CD8-positive, alpha-beta T cell (primary cell): ENCODE measurements at regions of chr2 and their contacts with region 1.

Region 1: DNA sequence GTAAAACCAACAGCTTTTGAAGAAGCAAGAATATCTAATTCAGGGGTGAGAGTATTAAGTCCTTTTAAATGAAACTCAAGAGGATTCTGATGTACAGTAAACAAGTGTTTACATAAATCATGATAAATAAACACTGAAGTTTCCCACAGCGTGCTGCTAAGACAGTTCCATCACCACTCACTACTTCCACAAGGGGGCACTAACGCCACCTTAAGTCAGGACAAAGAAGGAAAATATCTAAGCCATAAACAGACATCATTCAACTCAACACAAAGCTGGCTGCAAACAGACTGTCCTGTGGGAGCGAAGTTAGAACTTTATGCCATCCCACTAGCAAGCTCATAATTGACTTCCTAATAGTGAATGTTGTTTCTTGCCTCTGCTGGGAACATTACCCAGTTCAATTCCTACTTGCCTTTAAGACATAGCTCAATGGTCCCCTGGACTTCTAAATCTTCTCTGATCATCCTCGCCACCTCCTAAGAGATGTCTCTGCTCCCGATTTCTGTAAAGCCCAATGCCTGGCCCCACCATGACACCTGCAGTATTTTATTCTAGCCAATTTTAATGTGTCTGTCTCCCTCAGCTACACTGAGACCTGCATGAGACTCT is 36.5 kb downstream of the MRPL44 start:
- DNase-seq: peak; percentile 21 to 78 (median 64)
- ATAC-seq: peak; percentile 64
- H3K4me3 ChIP-seq: no peak overlapping the region
- H3K4me3 Mint-ChIP-seq: no peak overlapping the region
- H3K27ac ChIP-seq: no peak overlapping the region
- H3K27ac Mint-ChIP-seq: no peak overlapping the region
- H3K4me1 ChIP-seq: no peaks in the 10 kb centered on the region
- H3K4me1 Mint-ChIP-seq: no peaks in the 10 kb centered on the region
- H3K27me3 ChIP-seq: no peaks in the 10 kb centered on the region
- H3K27me3 Mint-ChIP-seq: no peaks in the 10 kb centered on the region
- CTCF ChIP-seq: peak; percentile 82

Region 2: DNA sequence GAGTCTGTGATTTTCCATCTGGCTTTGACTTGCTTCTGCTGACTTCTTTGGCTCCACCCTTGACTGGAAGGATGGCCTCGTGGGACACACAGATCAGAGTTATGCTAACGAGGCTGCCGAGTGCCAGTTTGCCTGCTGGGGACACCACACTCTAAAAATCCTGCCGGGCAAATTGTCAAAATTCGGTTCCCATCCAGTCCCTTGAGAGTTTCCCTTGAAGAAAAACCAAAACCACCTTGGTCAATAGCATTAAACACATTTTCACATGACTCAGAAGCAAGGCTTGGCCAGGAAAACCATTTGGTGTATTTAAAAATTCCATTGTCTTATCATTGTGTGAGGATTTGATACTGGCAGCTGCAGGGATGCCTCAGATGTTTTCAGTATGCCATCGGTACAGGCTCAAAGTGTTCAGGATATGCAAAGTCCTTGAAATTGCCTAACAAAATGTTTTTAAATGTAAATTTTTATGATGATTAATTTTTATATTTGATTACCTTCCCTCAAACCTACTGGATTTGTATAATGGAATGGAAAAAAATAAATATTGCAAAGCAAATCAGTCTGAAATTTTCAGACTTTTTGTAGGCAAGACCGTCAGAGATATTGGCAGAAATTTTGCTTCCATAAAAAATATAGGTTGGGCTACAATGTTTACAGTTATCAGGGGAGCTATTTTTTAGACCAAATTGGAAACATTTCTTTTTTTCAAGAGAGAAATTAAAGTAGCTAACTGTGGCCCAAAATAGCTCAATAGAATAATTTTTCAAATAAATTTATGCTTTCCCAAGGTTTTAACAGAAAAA is 900.1 kb before region 1 on chr2:
- CTCF ChIA-PET with region 1: no interaction called
- POLR2A ChIA-PET with region 1: no interaction called
- intact Hi-C with region 1: no loop called
- DNase-seq: no peak
- ATAC-seq: no peak
- H3K4me3 ChIP-seq: no peak overlapping the region
- H3K4me3 Mint-ChIP-seq: no peak overlapping the region
- H3K27ac ChIP-seq: no peak overlapping the region
- H3K27ac Mint-ChIP-seq: no peak overlapping the region
- H3K4me1 ChIP-seq: no peaks in the 10 kb centered on the region
- H3K4me1 Mint-ChIP-seq: no peaks in the 10 kb centered on the region
- H3K27me3 ChIP-seq: no peaks in the 10 kb centered on the region
- H3K27me3 Mint-ChIP-seq: peaks cover 2% of the 10 kb centered on the region
- CTCF ChIP-seq: no peak

Region 3: DNA sequence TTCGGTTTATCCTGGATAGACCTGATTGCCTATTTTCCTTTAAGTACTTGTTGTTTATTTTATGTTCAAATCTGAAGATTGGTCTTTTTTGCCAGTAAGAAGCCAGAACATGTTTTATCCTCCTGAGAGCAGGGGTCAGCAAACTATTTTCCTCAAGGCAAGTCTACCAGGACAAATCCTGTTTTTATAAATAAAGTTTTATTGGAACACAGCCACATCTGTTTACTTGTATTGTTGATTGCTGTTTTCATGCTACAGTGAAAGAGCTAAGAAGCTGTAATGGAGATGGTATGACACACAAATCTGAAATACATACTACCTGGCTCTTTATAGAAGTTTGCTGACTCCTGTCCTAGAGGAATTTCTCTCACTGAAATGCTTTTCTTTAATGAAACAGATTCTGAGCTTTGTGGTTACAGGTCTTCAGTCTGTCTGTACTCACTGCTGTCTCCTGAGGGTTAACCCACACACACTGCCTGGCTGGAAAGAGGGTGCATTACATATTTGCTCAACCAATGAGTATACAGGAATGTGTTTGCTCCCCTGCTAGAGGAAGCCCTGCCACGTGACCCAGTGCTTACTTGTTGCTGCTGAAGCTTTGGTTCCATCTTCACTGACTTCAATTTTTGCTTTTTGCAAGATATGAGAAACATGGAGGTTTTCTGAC is 13.9 kb before region 1 on chr2:
- CTCF ChIA-PET with region 1: interaction called, 18 read pairs
- POLR2A ChIA-PET with region 1: no interaction called
- intact Hi-C with region 1: no loop called
- DNase-seq: no peak
- ATAC-seq: no peak
- H3K4me3 ChIP-seq: no peak overlapping the region
- H3K4me3 Mint-ChIP-seq: no peak overlapping the region
- H3K27ac ChIP-seq: no peak overlapping the region
- H3K27ac Mint-ChIP-seq: no peak overlapping the region
- H3K4me1 ChIP-seq: no peaks in the 10 kb centered on the region
- H3K4me1 Mint-ChIP-seq: no peaks in the 10 kb centered on the region
- H3K27me3 ChIP-seq: no peaks in the 10 kb centered on the region
- H3K27me3 Mint-ChIP-seq: no peaks in the 10 kb centered on the region
- CTCF ChIP-seq: no peak

Region 4: DNA sequence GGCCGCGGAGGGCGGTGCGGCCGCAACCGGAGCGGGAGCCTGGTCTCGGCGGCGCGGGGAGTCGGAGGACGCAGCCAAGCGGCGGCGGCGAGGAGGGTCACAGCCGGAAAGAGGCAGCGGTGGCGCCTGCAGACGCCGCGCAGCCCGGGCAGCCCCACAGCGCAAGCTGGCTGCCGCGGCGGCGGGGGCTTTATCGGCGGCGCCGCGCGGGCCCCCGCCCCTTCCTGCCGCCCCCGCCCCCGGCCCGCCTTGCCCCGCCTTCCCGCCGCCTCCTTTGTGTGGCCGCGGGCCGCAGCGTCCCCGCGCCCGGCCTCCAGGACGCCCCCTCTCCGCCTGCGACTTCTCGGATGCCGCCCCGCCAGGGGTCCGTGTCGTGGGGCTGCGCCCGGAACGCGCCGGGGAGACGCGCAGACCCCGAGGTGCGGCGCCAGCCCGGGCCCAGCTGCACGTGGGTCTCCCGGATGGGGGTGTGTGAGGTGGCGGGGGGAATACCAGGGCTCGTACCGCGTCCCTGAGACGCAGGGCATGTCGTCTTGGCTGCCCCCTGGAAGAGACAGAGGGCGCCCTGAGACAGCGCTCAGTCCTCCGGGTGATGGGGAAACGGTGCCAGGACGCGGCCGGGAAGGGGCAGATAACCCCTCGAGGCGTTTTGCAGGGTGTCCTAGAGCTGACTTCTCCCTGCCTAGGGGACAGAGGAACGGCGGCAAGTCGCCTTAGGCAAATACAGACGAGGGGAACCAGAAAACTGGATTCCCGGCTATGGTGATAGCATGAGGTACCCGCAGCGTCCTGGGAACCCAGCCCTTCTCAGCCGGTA is 45.6 kb after region 1 on chr2 and contains the start of gene SERPINE2:
- CTCF ChIA-PET with region 1: interaction called, 8 read pairs
- POLR2A ChIA-PET with region 1: no interaction called
- intact Hi-C with region 1: loop called in 1 of 2 experiments (anchors 2 kb)
- DNase-seq: peak in 8 of 9 experiments; percentile 19 to 74 (median 52)
- ATAC-seq: peak; percentile 67
- H3K4me3 ChIP-seq: peak within 1 kb of the TSS; percentile 39 to 41
- H3K4me3 Mint-ChIP-seq: peak within 1 kb of the TSS; percentile 97
- H3K27ac ChIP-seq: no peak within 1 kb of the TSS
- H3K27ac Mint-ChIP-seq: peak within 1 kb of the TSS; percentile 65
- H3K4me1 ChIP-seq: peaks cover 11% of the 10 kb centered on the region
- H3K4me1 Mint-ChIP-seq: peaks cover 24% of the 10 kb centered on the region
- H3K27me3 ChIP-seq: peaks cover 0 to 2% of the 10 kb centered on the region in 2 experiments
- H3K27me3 Mint-ChIP-seq: peaks cover 42% of the 10 kb centered on the region
- CTCF ChIP-seq: no peak
- total RNA-seq, gene SERPINE2: 2.8 to 4.8 TPM

Region 5: DNA sequence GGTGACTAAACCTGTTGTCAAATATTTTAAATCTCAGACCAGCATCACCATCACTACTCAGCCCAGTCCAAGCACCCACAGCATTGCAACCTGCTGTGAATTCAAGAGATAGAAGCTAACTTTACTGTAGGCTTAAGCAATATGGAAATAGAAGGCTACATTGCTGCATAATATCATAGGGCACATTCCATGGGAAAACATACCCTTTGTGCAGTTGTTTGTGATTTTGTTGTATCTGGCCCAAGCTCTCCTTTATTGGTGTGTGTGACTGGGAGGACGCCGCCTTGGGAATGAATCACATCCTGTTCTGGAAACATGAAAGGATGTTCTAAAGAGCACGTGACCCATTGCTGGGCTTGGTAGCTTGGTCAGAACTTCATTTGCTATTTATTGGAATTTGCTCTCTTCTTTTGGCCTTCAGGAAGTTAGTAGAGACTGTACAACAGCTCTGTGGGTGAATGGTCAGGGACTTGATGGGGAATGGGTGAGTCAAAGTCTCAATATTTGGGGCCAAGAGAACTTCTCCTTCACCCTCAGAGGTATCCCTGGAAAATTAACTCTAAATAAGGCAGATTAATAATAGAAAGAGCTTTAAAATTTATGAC is 152.1 kb after region 1 on chr2:
- CTCF ChIA-PET with region 1: interaction called, 4 read pairs
- POLR2A ChIA-PET with region 1: no interaction called
- intact Hi-C with region 1: loop called in 1 of 2 experiments (anchors 10 kb)
- DNase-seq: no peak
- ATAC-seq: no peak
- H3K4me3 ChIP-seq: no peak overlapping the region
- H3K4me3 Mint-ChIP-seq: no peak overlapping the region
- H3K27ac ChIP-seq: no peak overlapping the region
- H3K27ac Mint-ChIP-seq: no peak overlapping the region
- H3K4me1 ChIP-seq: no peaks in the 10 kb centered on the region
- H3K4me1 Mint-ChIP-seq: no peaks in the 10 kb centered on the region
- H3K27me3 ChIP-seq: no peaks in the 10 kb centered on the region
- H3K27me3 Mint-ChIP-seq: peaks cover 5% of the 10 kb centered on the region
- CTCF ChIP-seq: no peak

Region 6: DNA sequence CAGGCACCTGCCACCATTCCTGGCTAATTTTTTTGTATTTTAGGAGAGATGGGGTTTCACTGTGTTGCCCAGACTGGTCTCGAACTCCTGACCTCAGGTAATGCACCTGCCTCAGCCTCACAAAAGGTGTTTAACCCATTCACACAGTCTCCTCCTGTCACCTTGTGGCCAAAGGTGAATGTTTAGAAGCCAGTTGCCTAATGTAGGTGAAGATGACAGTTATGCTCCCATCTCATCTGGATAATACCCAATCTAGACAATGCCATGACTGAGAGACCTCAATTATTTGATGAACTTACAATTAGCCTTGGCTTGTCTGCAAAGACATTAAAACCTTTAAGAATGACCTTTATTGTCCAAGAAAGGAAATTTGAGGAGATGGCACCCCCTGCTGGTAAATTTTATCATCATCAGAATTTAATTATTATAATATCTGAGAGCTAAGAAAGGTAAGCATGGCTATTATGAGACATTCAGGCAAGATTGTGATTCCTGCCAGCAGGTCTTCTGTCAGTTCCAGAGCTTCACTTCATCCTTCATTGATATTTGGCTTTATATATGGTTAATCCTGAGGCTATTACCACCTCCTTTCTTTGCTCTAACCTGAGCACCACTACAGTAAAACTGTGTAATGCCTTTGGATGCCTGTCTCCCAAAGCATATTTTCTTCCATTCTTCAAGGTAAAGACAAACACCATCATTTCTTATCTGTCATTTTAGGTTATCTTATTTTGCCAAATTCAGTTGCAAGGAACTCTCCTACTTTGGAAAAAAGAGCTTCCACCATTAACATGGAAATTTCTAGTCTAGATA is 290.6 kb after region 1 on chr2:
- CTCF ChIA-PET with region 1: interaction called, 143 read pairs
- POLR2A ChIA-PET with region 1: interaction called, 5 read pairs
- intact Hi-C with region 1: loop called (anchors 1 kb)
- DNase-seq: peak in 4 of 9 experiments; percentile 1 to 47 (median 36)
- ATAC-seq: no peak
- H3K4me3 ChIP-seq: no peak overlapping the region
- H3K4me3 Mint-ChIP-seq: no peak overlapping the region
- H3K27ac ChIP-seq: no peak overlapping the region
- H3K27ac Mint-ChIP-seq: no peak overlapping the region
- H3K4me1 ChIP-seq: no peaks in the 10 kb centered on the region
- H3K4me1 Mint-ChIP-seq: no peaks in the 10 kb centered on the region
- H3K27me3 ChIP-seq: peaks cover 0 to 4% of the 10 kb centered on the region in 2 experiments
- H3K27me3 Mint-ChIP-seq: peaks cover 23% of the 10 kb centered on the region
- CTCF ChIP-seq: peak; percentile 62

Region 7: DNA sequence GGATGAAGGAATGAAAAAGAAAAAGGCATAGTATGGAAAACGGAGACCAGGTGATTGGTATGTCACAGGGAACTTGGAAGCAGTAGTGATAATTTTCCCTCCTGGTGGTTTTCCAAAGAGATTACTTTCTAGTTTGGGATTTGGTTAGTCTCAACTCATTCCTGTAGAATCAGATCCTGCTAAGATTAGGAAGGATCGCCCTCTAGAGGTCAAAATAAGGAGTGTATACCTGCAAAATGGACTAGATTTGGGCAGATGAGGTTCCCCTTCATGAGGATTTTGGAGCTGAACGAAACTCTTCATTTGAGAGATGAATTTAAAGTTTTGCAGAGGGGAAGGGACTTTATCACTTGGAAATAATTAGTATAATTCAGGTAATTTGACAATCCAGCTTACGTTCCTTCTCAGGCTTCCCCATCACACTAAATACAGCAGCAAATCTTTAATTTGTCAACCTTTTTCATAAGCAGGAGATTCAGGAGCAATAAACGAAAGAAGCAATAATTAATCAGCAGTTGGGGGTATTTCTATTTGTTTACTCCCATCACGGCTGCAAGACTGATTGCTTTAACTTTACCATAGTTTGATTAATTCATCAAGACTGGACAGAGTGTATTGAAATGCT is 657.2 kb after region 1 on chr2:
- CTCF ChIA-PET with region 1: interaction called, 6 read pairs
- POLR2A ChIA-PET with region 1: no interaction called
- intact Hi-C with region 1: loop called (anchors 1 to 2 kb)
- DNase-seq: peak in 3 of 9 experiments; percentile 20 to 69 (median 60)
- ATAC-seq: peak; percentile 54
- H3K4me3 ChIP-seq: no peak overlapping the region
- H3K4me3 Mint-ChIP-seq: no peak overlapping the region
- H3K27ac ChIP-seq: no peak overlapping the region
- H3K27ac Mint-ChIP-seq: no peak overlapping the region
- H3K4me1 ChIP-seq: no peaks in the 10 kb centered on the region
- H3K4me1 Mint-ChIP-seq: peaks cover 2% of the 10 kb centered on the region
- H3K27me3 ChIP-seq: no peaks in the 10 kb centered on the region
- H3K27me3 Mint-ChIP-seq: no peaks in the 10 kb centered on the region
- CTCF ChIP-seq: peak; percentile 91